ENCODE measurements at regions of chr6 and their contacts with region 1.

Region 1: DNA sequence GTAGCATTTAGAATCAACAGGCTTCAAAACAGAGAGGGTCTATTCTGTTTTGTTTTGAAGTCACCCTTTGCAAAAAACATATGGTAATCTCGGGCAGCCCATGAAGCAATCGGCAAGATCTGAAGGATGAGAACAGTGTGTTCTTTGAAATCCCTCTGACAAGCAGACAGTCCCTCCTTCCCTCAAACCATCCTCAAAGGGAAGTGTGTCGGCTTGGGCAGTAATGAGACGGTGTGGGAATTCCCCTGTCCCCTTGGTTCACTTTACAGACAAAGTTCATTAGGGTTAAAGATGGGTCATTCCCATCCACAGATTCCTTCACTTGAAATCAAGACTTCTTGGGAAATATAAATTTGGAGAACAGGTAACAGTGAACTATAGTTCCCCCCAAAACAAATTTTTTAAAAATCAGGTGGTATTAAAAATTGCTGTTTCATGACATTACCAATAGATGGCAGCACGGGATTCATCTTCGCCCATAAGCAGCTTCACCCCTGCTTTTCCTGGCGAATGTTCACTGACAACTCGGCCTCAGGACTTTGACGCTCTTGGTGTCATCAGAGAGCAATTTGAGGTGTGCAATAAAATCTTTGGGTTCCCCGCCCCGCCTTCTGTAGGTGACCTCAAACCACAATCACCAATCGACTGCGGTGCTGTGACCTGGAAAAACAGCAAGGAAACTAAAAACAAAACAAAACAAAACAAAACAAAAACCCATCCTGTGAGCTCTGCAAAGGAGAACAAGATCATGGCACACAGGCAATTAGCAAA is 159.3 kb upstream of the TNFAIP3 start:
- DNase-seq: peak; percentile 56 to 94
- H3K4me3 ChIP-seq: peak overlapping the region; percentile 6; the same call in 1 of the 2 replicates
- H3K27ac ChIP-seq: peak overlapping the region; percentile 89
- H3K4me1 ChIP-seq: peaks cover 33% of the 10 kb centered on the region
- H3K27me3 ChIP-seq: no peaks in the 10 kb centered on the region
- CTCF ChIP-seq: peak; percentile 95

Region 2: GRCh38 chr6:137094411-137095008 is 613.3 kb before region 1 on chr6:
- CTCF ChIA-PET with region 1: no interaction called
- POLR2A ChIA-PET with region 1: no interaction called
- intact Hi-C with region 1: loop called (anchors 5 kb)
- DNase-seq: peak; percentile 53 to 82
- H3K4me3 ChIP-seq: no peak overlapping the region
- H3K27ac ChIP-seq: no peak overlapping the region
- H3K4me1 ChIP-seq: peaks cover 5% of the 10 kb centered on the region
- H3K27me3 ChIP-seq: no peaks in the 10 kb centered on the region
- CTCF ChIP-seq: peak; percentile 92

Region 3: GRCh38 chr6:137351890-137352289 is 355.9 kb before region 1 on chr6:
- CTCF ChIA-PET with region 1: no interaction called
- POLR2A ChIA-PET with region 1: no interaction called
- intact Hi-C with region 1: no loop called
- DNase-seq: peak in 1 of 2 experiments; percentile 21
- H3K4me3 ChIP-seq: no peak overlapping the region
- H3K27ac ChIP-seq: no peak overlapping the region
- H3K4me1 ChIP-seq: no peaks in the 10 kb centered on the region
- H3K27me3 ChIP-seq: no peaks in the 10 kb centered on the region
- CTCF ChIP-seq: no peak

Region 4: DNA sequence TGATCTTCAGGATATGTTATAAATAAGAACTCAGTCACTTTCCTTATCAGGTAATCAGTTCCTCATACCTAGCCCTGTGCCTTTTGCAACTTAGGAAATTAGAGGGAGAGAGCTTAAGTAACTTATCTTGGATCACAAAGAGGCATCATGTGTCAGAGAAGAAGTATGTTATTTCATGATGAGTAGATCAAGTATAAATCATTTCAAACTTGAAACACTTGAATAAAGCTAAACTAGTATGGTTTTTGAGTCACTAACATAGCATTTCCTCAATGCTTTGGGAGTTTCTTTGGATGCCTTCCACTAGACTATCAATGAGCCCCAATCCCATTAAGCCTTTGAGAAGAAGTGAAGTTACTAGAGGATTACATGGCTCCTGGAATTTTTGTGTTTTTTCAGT is 56.7 kb after region 1 on chr6:
- CTCF ChIA-PET with region 1: no interaction called
- POLR2A ChIA-PET with region 1: interaction called, 6 read pairs
- intact Hi-C with region 1: loop called (anchors 1 kb)
- DNase-seq: peak in 1 of 2 experiments; percentile 100
- H3K4me3 ChIP-seq: no peak overlapping the region
- H3K27ac ChIP-seq: peak overlapping the region; percentile 92
- H3K4me1 ChIP-seq: peaks cover 46% of the 10 kb centered on the region
- H3K27me3 ChIP-seq: no peaks in the 10 kb centered on the region
- CTCF ChIP-seq: no peak

Region 5: GRCh38 chr6:137799950-137800568 is 92.3 kb after region 1 on chr6:
- CTCF ChIA-PET with region 1: no interaction called
- POLR2A ChIA-PET with region 1: no interaction called
- intact Hi-C with region 1: loop called (anchors 2 kb)
- DNase-seq: peak in 1 of 2 experiments; percentile 14
- H3K4me3 ChIP-seq: no peak overlapping the region
- H3K27ac ChIP-seq: no peak overlapping the region
- H3K4me1 ChIP-seq: no peaks in the 10 kb centered on the region
- H3K27me3 ChIP-seq: no peaks in the 10 kb centered on the region
- CTCF ChIP-seq: peak; percentile 83

Region 6: GRCh38 chr6:137944793-137945498 is 237.2 kb after region 1 on chr6:
- CTCF ChIA-PET with region 1: no interaction called
- POLR2A ChIA-PET with region 1: no interaction called
- intact Hi-C with region 1: loop called (anchors 1 kb)
- DNase-seq: no peak
- H3K4me3 ChIP-seq: no peak overlapping the region
- H3K27ac ChIP-seq: no peak overlapping the region
- H3K4me1 ChIP-seq: peaks cover 2% of the 10 kb centered on the region; the same call in 1 of the 2 replicates
- H3K27me3 ChIP-seq: no peaks in the 10 kb centered on the region
- CTCF ChIP-seq: peak; percentile 90

Region 7: DNA sequence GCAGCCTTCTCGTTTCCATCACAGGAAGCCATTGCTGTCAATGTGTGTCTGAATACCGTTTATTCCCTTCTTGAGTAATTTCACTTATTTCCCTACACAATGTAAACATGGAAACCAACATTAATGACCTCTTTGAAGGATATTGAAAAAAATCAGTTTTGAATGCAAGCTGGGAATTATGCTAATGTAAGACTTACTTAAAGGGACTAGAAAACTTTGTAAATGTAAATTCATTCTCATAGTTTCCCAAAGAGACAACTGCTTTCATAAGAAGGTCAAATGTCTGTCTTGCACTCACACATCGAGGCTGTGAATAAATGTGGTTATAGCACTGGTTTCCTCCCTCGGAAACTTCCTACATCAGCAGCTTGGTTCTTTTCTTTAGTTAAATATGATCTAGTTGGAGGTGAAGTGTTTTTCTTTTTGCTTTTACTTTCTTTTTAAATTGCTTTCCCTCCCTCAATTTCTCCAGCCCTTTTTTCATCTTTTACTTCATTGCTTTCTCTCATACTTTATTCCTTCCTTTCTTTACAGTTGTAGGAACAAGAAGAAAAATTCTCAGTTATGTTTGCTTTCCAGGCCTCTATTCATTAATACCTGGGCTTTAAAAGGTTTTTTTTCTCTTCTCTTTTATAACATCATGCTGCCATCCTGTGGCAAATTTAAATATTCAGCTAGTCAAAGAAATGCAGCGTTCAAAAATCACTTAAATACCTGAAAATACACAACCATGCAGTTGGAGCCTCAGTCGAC is 267.6 kb after region 1 on chr6:
- CTCF ChIA-PET with region 1: no interaction called
- POLR2A ChIA-PET with region 1: no interaction called
- intact Hi-C with region 1: loop called (anchors 1 kb)
- DNase-seq: no peak
- H3K4me3 ChIP-seq: no peak overlapping the region
- H3K27ac ChIP-seq: no peak overlapping the region
- H3K4me1 ChIP-seq: peaks cover 36% of the 10 kb centered on the region
- H3K27me3 ChIP-seq: no peaks in the 10 kb centered on the region
- CTCF ChIP-seq: peak; percentile 77

Region 8: DNA sequence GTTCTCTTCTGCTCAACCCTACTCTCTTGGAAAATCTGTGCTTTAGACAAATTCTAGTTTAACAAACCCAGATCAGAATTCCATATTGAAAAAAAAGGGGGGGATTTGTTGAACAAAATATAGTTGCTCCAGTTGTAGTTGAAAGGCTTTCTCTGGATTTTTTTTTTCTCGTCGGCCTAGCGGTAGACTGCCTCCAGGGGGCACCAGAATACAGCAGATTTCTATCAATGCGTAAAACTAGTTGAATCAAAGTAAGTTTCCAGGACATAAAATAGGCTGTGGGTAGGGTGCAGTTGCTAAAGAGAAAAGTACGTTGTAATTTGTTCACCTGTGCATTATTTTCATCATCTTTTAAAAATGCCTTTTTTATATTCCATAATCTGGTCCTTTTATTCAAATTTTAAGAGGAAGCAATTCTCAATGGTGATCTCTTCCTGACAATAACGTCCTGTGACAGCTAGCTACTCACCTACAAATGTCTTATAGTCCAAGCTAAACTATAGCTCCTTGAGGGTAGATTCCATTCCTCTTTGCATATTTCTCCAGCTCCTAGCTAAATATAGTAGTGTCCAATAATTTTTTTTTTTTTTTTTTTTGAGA is 294.1 kb after region 1 on chr6:
- CTCF ChIA-PET with region 1: interaction called, 3 read pairs
- POLR2A ChIA-PET with region 1: no interaction called
- intact Hi-C with region 1: loop called (anchors 1 kb)
- DNase-seq: peak; percentile 56 to 63
- H3K4me3 ChIP-seq: no peak overlapping the region
- H3K27ac ChIP-seq: no peak overlapping the region
- H3K4me1 ChIP-seq: peaks cover 24% of the 10 kb centered on the region
- H3K27me3 ChIP-seq: no peaks in the 10 kb centered on the region
- CTCF ChIP-seq: peak; percentile 98